GM12878 (cell line): ENCODE measurements at regions of chr2 and their contacts with region 1.

Region 1: GRCh38 chr2:241686649-241687425 is at the start of gene DTYMK:
- DNase-seq: peak; percentile 74
- ATAC-seq: peak; percentile 97
- H3K4me3 ChIP-seq: peak within 1 kb of the TSS; percentile 88
- H3K27ac ChIP-seq: peak within 1 kb of the TSS; percentile 90
- H3K4me1 ChIP-seq: peaks cover 7% of the 10 kb centered on the region; the same call in 1 of the 2 replicates
- H3K27me3 ChIP-seq: no peaks in the 10 kb centered on the region
- CTCF ChIP-seq: no peak
- EP300 ChIP-seq: no peak
- POLR2A ChIP-seq: peak; percentile 95
- RAD21 ChIP-seq: no peak
- polyA plus RNA-seq, gene DTYMK: 7.0 to 20.5 TPM

Region 2: GRCh38 chr2:241702132-241703031 is 15.5 kb after region 1 on chr2:
- CTCF ChIA-PET with region 1: interaction called, 10 read pairs
- POLR2A ChIA-PET with region 1: interaction called, 9 read pairs
- RAD21 ChIA-PET with region 1: interaction called, 18 read pairs
- SMC1A ChIA-PET with region 1: interaction called, 5 read pairs
- in situ Hi-C with region 1: no loop called
- intact Hi-C with region 1: loop called (anchors 1 kb)
- DNase-seq: peak; percentile 37
- ATAC-seq: peak; percentile 87
- H3K4me3 ChIP-seq: peak overlapping the region; percentile 95
- H3K27ac ChIP-seq: peak overlapping the region; percentile 89
- H3K4me1 ChIP-seq: 0 out of 2 replicates have a peak, but pooled peaks cover 6% of the 10 kb centered on the region
- H3K27me3 ChIP-seq: no peaks in the 10 kb centered on the region
- CTCF ChIP-seq: peak; percentile 42 to 60 (median 49)
- EP300 ChIP-seq: no peak
- POLR2A ChIP-seq: peak; percentile 75
- RAD21 ChIP-seq: no peak

Region 3: GRCh38 chr2:241734467-241735208 is 47.8 kb after region 1 on chr2 and contains the start of gene D2HGDH:
- CTCF ChIA-PET with region 1: interaction called, 4 read pairs
- POLR2A ChIA-PET with region 1: no interaction called
- RAD21 ChIA-PET with region 1: interaction called, 5 read pairs
- SMC1A ChIA-PET with region 1: interaction called, 11 read pairs
- in situ Hi-C with region 1: no loop called
- intact Hi-C with region 1: loop called (anchors 5 kb)
- DNase-seq: no peak
- ATAC-seq: peak; percentile 90
- H3K4me3 ChIP-seq: peak within 1 kb of the TSS; percentile 84
- H3K27ac ChIP-seq: peak within 1 kb of the TSS; percentile 86
- H3K4me1 ChIP-seq: 0 out of 2 replicates have a peak, but pooled peaks cover 3% of the 10 kb centered on the region
- H3K27me3 ChIP-seq: no peaks in the 10 kb centered on the region
- CTCF ChIP-seq: no peak
- EP300 ChIP-seq: no peak
- POLR2A ChIP-seq: peak; percentile 83
- RAD21 ChIP-seq: no peak
- polyA plus RNA-seq, gene D2HGDH: 0.52 to 1.1 TPM

Region 4: GRCh38 chr2:241803387-241804325 is 116.8 kb after region 1 on chr2:
- CTCF ChIA-PET with region 1: no interaction called
- POLR2A ChIA-PET with region 1: no interaction called
- RAD21 ChIA-PET with region 1: no interaction called
- SMC1A ChIA-PET with region 1: no interaction called
- in situ Hi-C with region 1: no loop called
- intact Hi-C with region 1: no loop called
- DNase-seq: no peak
- ATAC-seq: peak; percentile 81
- H3K4me3 ChIP-seq: peak overlapping the region; percentile 69
- H3K27ac ChIP-seq: no peak overlapping the region
- H3K4me1 ChIP-seq: peaks cover 14% of the 10 kb centered on the region
- H3K27me3 ChIP-seq: no peaks in the 10 kb centered on the region; a peak in 1 of 4 replicates
- CTCF ChIP-seq: no peak
- EP300 ChIP-seq: no peak
- POLR2A ChIP-seq: peak; percentile 75
- RAD21 ChIP-seq: no peak